Calu3 (cell line): ENCODE measurements at regions of chr7 and their contacts with region 1.

Region 1: GRCh38 chr7:105304040-105304895 is 84.5 kb downstream of the SRPK2 start:
- DNase-seq: peak; percentile 3
- H3K4me3 Mint-ChIP-seq: no peak overlapping the region
- H3K27ac Mint-ChIP-seq: peak overlapping the region; percentile 39
- H3K4me1 Mint-ChIP-seq: peaks cover 23% of the 10 kb centered on the region
- H3K27me3 Mint-ChIP-seq: no peaks in the 10 kb centered on the region
- CTCF ChIP-seq: no peak

Region 2: DNA sequence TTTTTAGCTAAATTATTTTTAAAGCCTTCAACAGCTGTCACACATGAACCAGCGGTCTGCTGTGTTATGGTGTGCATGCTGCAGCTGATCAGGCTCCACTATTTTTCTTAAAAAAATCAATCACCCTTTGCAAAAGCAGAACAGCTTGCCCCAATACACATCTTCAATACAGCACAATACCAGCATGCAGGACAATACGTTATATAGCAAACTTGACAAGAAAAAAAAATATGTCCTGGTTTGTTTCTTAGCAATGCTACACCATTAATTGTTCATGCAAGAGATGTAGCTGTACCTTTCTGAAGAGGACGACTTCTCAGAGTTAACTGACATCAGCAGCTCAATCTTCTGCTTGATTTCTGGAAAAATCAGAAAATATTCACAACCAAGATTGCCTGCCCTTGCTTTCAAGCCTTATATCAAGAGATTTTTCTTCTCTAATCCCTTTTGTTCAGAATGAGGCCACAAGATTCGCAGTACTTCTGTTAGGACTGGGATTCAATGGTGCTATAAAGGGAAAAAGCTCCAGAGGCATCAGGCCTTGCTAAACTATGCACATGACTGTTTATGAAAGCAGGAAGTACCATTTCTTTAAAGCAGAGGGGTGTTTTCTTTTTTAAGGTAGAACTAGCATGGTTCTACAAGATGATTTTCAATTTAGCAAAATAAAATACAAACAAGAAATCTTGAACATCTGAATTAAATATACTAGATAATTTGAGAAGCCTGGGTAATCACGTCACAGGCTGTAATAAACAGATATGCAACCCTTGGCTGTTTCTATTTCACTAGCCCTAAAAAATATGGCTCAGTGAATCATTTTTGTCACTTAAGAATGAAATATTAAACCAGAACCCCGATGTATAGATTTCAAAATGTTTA is 35.5 kb before region 1 on chr7:
- CTCF ChIA-PET with region 1: no interaction called
- intact Hi-C with region 1: loop called (anchors 5 kb)
- DNase-seq: no peak
- H3K4me3 Mint-ChIP-seq: peak overlapping the region; percentile 24
- H3K27ac Mint-ChIP-seq: peak overlapping the region; percentile 46
- H3K4me1 Mint-ChIP-seq: peaks cover 8% of the 10 kb centered on the region
- H3K27me3 Mint-ChIP-seq: no peaks in the 10 kb centered on the region
- CTCF ChIP-seq: no peak

Region 3: GRCh38 chr7:105278973-105279687 is 25.1 kb before region 1 on chr7:
- CTCF ChIA-PET with region 1: no interaction called
- intact Hi-C with region 1: loop called (anchors 1 kb)
- DNase-seq: peak; percentile 21
- H3K4me3 Mint-ChIP-seq: peak overlapping the region; percentile 58
- H3K27ac Mint-ChIP-seq: peak overlapping the region; percentile 81
- H3K4me1 Mint-ChIP-seq: peaks cover 51% of the 10 kb centered on the region
- H3K27me3 Mint-ChIP-seq: no peaks in the 10 kb centered on the region
- CTCF ChIP-seq: no peak